Left ventricle myocardium inferior (tissue), 1 donor: ENCODE measurements at regions of chr7 and their contacts with region 1.

Region 1: DNA sequence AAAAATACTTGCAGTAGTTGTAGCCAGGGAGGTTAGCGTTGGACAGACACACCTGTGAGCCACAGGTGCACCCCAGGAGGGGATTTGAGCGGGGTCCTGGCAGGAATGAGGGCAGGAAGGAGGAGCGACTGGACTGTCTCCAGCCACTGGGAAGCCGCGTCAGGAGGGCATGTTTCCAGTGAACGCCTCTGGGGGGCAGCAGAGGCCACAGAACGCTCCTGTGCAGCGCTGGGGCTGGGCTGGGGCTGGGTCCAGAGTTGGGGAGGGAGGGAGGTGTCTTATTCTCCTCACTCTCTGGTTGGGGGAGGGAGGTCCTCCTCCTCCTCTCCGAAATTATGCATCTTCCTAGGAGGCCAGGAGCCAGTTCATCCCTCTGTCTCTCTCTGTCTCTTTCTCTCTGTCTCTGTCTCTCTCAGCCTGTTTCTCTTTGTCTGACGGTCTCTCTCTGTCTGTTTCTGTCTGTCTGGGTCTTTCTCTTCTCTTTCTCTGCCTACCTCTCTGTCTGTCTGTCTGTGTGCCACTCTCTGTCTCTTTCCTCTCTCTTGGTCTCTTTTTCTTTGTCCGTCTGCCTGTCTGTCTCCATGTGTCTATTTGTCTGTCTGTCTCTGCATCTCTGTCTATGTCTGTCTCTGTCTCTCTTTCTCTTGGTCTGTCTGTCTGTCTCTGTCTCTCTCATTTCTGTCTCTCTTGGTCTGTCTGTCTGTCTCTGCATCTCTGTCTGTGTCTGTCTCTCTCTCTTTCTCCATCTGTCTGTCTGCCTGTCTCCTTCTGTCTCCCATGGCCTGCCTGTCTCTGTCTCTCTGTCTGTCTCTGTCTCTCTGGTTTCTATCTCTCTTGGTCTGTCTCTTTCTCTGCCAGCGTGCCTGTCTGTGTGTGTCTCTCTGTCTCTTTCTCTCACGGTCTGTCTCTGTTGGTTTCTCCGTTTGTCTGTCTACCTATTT is 9.9 kb upstream of the PSMG3 start:
- DNase-seq: peak; percentile 72
- H3K4me3 ChIP-seq: no peak overlapping the region
- H3K27ac ChIP-seq: no peak overlapping the region
- H3K4me1 ChIP-seq: peaks cover 14% of the 10 kb centered on the region
- H3K27me3 ChIP-seq: no peaks in the 10 kb centered on the region
- CTCF ChIP-seq: peak; percentile 90

Region 2: DNA sequence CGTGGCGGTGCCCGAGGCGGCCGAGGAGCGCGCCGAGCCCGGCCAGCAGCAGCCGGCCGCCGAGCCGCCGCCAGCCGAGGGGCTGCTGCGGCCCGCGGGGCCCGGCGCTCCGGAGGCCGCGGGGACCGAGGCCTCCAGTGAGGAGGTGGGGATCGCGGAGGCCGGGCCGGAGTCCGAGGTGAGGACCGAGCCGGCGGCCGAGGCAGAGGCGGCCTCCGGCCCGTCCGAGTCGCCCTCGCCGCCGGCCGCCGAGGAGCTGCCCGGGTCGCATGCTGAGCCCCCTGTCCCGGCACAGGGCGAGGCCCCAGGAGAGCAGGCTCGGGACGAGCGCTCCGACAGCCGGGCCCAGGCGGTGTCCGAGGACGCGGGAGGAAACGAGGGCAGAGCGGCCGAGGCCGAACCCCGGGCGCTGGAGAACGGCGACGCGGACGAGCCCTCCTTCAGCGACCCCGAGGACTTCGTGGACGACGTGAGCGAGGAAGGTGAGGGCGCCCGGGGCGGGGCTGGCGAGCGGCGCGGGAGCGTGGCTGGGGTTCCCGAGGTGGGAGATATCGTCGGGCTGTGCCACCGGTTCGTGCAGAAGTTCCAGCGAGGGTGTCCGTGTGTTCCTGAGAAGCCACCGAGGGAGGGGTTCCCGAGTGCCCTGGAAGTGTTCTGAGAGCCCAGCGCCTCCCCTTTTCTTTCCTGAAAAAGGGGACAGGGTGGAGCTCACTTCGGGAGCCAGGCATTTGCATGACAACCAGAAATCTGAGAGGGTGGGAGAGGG is 775.4 kb after region 1 on chr7:
- intact Hi-C with region 1: loop called (anchors 5 kb)
- DNase-seq: no peak
- H3K4me3 ChIP-seq: peak overlapping the region; percentile 99
- H3K27ac ChIP-seq: peak overlapping the region; percentile 99
- H3K4me1 ChIP-seq: peaks cover 61% of the 10 kb centered on the region
- H3K27me3 ChIP-seq: no peaks in the 10 kb centered on the region
- CTCF ChIP-seq: no peak